ENCODE measurements at regions of chr11 and their contacts with region 1.

Region 1: GRCh38 chr11:65540297-65541092 is 15.6 kb downstream of the SCYL1 start:
- DNase-seq: peak; percentile 92 to 97 (median 94)
- ATAC-seq: peak; percentile 97
- H3K4me3 ChIP-seq: peak overlapping the region; percentile 76
- H3K27ac ChIP-seq: peak overlapping the region; percentile 78
- H3K4me1 ChIP-seq: peaks cover 9 to 48% of the 10 kb centered on the region in 2 experiments
- H3K27me3 ChIP-seq: no peaks in the 10 kb centered on the region
- CTCF ChIP-seq: peak; percentile 88 to 94 (median 92)
- EP300 ChIP-seq: no peak
- POLR2A ChIP-seq: peak; percentile 69
- RAD21 ChIP-seq: peak; percentile 92 to 96

Region 2: DNA sequence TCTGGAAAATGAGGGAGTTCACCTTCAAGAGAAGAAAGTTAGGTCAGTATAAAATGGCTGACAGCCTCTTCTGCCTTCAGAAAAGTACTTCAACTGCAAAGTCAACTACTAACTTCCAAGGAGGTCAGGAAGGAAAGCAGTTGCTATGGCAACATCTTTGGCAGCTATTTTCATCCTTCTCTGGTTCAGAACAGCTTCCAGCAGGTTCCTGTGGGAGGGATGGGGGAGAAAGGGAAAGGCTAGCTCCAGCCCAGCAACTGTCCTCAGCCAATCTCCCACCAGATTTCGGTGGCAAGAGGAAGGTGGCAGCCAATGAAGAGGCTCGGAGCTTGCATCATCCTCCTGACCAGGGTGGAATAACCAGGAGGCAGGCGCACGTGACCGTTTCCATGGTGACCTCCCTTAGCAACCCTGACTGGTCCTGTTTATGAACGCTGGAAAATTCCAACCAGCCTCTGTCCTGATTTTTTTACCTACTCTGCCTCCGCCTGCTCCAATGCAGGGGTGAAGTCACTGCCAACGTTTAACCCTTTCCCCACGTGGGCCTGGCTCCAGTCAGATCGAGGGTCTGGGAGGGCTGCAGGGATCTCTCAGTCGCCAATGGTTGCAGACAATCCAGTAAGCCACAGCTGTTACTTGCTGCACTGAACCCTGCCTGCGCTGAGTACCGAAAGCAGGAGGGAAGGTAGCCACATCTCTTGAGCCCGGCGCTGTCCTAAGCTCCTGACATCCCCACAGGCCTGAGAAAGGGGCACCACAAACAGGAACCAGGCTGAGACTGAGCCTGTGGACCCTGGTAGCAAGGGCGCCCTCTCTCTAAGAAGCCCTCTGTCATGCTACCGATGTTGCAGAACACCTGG is 52.9 kb before region 1 on chr11:
- CTCF ChIA-PET with region 1: no interaction called
- POLR2A ChIA-PET with region 1: no interaction called
- in situ Hi-C with region 1: no loop called
- intact Hi-C with region 1: no loop called
- DNase-seq: peak; percentile 72 to 93 (median 81)
- ATAC-seq: peak; percentile 81
- H3K4me3 ChIP-seq: no peak overlapping the region
- H3K27ac ChIP-seq: peak overlapping the region; percentile 40; the same call in 1 of the 3 replicates
- H3K4me1 ChIP-seq: peaks cover 69 to 75% of the 10 kb centered on the region in 2 experiments
- H3K27me3 ChIP-seq: no peaks in the 10 kb centered on the region
- CTCF ChIP-seq: no peak
- EP300 ChIP-seq: no peak
- POLR2A ChIP-seq: no peak
- RAD21 ChIP-seq: no peak

Region 3: DNA sequence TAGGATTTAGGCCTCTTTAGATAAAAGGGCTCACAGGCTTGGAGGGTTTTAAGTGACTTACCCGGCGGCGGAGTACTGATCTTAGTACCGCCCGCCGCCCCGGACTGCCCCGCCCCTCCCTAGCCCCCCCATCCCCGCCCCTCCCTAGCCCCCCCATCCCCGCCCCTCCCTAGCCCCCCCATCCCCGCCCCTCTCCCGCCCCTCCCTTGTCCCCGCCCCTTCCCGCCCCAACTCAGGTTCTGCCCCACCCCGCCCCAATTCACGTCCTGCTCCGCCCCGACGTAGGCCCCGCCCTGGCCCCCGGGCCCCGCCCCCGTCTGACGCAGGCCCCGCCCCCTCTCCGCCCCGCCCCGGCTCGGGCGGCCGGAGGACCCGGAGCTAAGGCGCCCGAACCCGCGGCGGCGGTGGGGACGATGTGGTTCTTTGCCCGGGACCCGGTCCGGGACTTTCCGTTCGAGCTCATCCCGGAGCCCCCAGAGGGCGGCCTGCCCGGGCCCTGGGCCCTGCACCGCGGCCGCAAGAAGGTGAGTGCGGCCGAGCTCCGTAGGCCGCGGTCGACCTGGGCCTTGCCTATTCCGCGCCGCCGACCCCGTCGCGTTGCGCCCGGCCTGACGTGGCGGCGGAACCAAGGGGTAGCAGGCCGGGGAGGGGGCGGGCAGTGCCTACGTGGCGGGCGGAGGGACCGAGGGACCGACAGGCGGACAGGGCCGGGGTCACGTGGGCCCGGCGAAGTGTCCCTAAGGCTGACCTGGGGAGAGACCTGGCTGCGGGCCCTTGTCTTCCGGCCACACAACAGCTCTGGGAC is 15.6 kb before region 1 on chr11 and contains the start of gene SCYL1:
- CTCF ChIA-PET with region 1: no interaction called
- POLR2A ChIA-PET with region 1: interaction called, 48 read pairs
- in situ Hi-C with region 1: no loop called
- intact Hi-C with region 1: no loop called
- DNase-seq: peak; percentile 74 to 96 (median 95)
- ATAC-seq: peak; percentile 87
- H3K4me3 ChIP-seq: peak within 1 kb of the TSS; percentile 100
- H3K27ac ChIP-seq: peak within 1 kb of the TSS; percentile 90
- H3K4me1 ChIP-seq: peaks cover 38 to 48% of the 10 kb centered on the region in 2 experiments
- H3K27me3 ChIP-seq: no peaks in the 10 kb centered on the region
- CTCF ChIP-seq: no peak
- EP300 ChIP-seq: no peak
- POLR2A ChIP-seq: peak; percentile 67
- RAD21 ChIP-seq: no peak
- polyA plus RNA-seq, gene SCYL1: 1.9 to 4.7 TPM

Region 4: GRCh38 chr11:65588199-65589054 is 47.9 kb after region 1 on chr11:
- CTCF ChIA-PET with region 1: interaction called, 3 read pairs
- POLR2A ChIA-PET with region 1: interaction called, 6 read pairs
- in situ Hi-C with region 1: no loop called
- intact Hi-C with region 1: loop called (anchors 5 kb)
- DNase-seq: peak; percentile 66 to 84 (median 77)
- ATAC-seq: peak; percentile 97
- H3K4me3 ChIP-seq: no peak overlapping the region
- H3K27ac ChIP-seq: peak overlapping the region; percentile 31; the same call in 1 of the 3 replicates
- H3K4me1 ChIP-seq: peaks cover 16 to 70% of the 10 kb centered on the region in 2 experiments
- H3K27me3 ChIP-seq: no peaks in the 10 kb centered on the region
- CTCF ChIP-seq: peak; percentile 83 to 90 (median 84)
- EP300 ChIP-seq: 0 out of 2 replicates have a peak, but pooled peaks have one; percentile 12
- POLR2A ChIP-seq: no peak
- RAD21 ChIP-seq: peak; percentile 36 to 69

Measured in K562 (cell line).